ENCODE measurements at regions of chr5 and their contacts with region 1.

Region 1: DNA sequence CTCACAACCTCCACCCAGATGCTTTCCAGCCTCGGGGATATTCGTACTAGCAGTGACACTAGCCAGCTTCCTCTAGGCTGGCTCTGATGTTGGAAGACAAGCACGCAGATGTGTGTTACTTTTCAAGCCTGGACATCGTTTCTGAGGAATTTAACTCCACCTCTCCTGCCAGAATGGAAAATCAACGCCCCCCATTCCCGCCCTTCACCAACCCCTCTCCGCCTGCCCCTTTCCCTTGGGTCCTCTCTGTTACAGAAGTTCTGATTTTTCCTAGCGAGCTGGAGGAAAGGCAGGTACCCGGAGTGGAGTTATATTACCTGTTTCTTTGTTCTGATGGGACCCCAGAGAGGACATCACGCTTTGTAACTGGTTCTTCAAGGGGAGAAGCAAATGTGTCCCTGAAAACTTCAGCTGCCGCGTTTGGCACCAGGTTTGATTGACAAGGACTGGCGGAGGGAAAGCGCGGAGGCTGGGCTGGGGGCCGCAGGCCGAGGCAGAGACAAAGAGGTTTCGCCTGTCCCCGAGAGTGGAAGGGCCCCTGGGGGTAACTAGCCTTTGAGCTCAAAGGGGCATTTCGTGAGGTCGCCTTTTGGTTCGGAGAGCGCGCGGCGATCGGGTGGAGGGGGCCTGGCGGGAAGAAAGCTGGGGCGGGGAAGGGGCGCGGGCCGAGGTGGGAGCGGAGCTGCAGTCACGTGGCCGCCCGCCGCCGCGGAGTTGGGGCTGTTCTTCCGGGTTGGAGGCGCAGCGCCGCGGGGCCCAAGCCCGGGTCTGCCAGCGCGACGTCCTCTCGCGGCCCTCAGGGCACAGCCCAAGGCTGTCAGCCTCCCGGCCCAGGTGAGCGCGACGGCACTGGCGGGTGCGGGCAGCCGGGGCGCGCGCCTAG is at the start of gene NNT:
- DNase-seq: peak; percentile 75 to 84 (median 79)
- H3K4me3 ChIP-seq: peak within 1 kb of the TSS; percentile 82
- H3K27ac ChIP-seq: peak within 1 kb of the TSS; percentile 60 to 76
- H3K4me1 ChIP-seq: peaks cover 2% of the 10 kb centered on the region
- H3K27me3 ChIP-seq: no peaks in the 10 kb centered on the region
- CTCF ChIP-seq: no peak
- EP300 ChIP-seq: no peak
- POLR2A ChIP-seq: no peak
- total RNA-seq, gene NNT: 17.2 to 44.7 (median 38.5) TPM

Region 2: DNA sequence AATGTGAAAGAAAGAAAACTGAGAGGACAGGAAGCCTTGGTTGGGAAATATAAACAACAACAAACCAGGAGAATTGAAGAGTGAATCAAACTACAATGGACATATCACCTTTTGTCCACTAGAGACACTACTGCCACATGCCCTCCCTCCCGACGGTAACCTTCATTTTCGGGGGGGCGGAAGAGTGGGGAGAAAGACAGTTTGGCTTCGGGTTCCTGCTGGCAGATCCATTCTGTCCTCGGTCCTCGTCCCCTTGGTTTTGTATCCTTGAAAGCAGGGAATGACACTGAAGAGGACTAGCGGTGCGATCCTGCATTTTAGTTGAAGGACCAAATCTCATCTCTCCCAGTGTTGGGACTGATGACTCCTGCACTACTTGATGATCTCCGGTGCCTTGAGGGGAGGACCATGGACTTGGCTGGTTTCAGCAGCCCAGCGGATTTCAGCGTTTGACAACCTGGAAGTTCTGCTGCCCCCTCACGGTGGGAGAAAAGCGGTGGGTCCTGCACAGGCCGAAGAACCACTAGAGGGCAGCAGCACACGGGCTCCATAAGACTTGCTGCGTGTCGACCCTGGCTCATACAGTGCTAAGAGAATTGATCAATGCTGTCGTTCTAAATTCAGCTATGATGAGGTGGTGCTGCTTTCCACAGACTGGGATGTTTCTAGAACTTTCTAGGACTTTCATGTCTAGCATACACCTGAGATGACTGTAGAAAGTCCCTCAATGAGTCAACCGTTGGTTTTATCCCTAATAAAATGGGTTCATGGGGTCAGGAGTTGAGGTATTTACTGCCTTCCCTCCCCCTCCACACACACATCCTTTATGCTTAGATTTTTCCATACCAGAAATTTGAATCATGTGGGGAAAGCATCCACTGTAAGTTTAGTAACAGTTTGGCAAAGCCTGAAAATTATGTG is 497.1 kb before region 1 on chr5:
- intact Hi-C with region 1: no loop called
- DNase-seq: peak; percentile 85 to 92 (median 91)
- H3K4me3 ChIP-seq: peak overlapping the region; percentile 31
- H3K27ac ChIP-seq: no peak overlapping the region
- H3K4me1 ChIP-seq: no peaks in the 10 kb centered on the region
- H3K27me3 ChIP-seq: no peaks in the 10 kb centered on the region
- CTCF ChIP-seq: peak; percentile 93 to 99 (median 98)
- EP300 ChIP-seq: no peak
- POLR2A ChIP-seq: peak; percentile 22

Region 3: GRCh38 chr5:43556857-43557542 is 45.7 kb before region 1 on chr5 and contains the start of gene PAIP1:
- intact Hi-C with region 1: loop called in 3 of 4 experiments (anchors 2 to 5 kb)
- DNase-seq: peak; percentile 76 to 87 (median 81)
- H3K4me3 ChIP-seq: peak within 1 kb of the TSS; percentile 88
- H3K27ac ChIP-seq: peak within 1 kb of the TSS; percentile 95 to 97
- H3K4me1 ChIP-seq: no peaks in the 10 kb centered on the region
- H3K27me3 ChIP-seq: no peaks in the 10 kb centered on the region
- CTCF ChIP-seq: peak; percentile 56 to 75 (median 74)
- EP300 ChIP-seq: no peak
- POLR2A ChIP-seq: peak; percentile 43
- total RNA-seq, gene PAIP1: 45.3 to 75.8 (median 61.6) TPM

Region 4: GRCh38 chr5:43582082-43583005 is 20.4 kb before region 1 on chr5:
- intact Hi-C with region 1: loop called in 1 of 4 experiments (anchors 2 kb)
- DNase-seq: no peak
- H3K4me3 ChIP-seq: no peak overlapping the region
- H3K27ac ChIP-seq: no peak overlapping the region
- H3K4me1 ChIP-seq: no peaks in the 10 kb centered on the region
- H3K27me3 ChIP-seq: no peaks in the 10 kb centered on the region
- CTCF ChIP-seq: no peak
- EP300 ChIP-seq: no peak
- POLR2A ChIP-seq: no peak

Region 5: GRCh38 chr5:43772764-43773477 is 170.2 kb after region 1 on chr5:
- intact Hi-C with region 1: no loop called
- DNase-seq: no peak
- H3K4me3 ChIP-seq: no peak overlapping the region
- H3K27ac ChIP-seq: no peak overlapping the region
- H3K4me1 ChIP-seq: no peaks in the 10 kb centered on the region
- H3K27me3 ChIP-seq: no peaks in the 10 kb centered on the region
- CTCF ChIP-seq: no peak
- EP300 ChIP-seq: no peak
- POLR2A ChIP-seq: no peak